Activated B cell treated with CpG ODN at 0.5 μM for 24 hours (primary cell): ENCODE measurements at regions of chr1 and their contacts with region 1.

Region 1: DNA sequence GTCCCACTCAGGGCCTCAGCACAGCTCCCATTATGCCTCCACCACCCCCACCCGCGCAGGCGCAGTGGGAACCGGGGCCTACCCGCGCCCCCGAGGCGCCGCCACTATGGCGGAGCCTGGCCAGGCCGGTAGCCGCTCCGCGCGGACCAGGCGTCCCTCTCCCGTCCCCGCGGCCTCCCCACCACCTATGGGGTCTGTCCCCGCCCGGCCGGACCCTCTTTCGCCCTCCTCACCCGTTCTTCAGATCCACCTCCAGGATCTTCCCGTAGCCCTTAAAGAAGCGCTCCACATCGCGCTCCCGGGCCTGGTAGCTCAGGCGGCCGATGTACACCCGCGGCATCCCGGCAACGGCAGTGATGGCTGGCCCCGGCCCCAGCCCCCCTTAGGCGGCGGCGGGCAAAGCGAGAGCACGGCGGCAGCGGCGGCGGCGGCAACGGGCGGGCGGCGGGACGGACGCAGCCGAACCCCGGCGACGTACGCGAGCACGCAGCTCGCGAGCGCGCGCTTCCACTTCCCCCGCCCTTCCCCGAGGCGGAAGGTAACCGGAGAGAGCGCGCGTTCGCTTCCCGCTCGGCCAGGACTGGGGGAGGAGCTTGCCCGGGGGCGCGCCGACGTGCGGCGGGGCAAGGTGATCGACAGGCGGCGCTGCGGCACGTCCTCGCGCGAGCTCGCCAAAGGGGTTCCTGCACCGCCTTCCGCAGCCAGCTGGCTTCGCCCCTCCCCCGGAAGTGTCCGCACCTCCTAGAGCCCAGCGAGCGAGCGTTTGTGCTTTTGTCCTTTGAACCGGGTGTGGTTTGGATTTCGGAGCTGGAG is at the start of gene SRSF4:
- DNase-seq: peak; percentile 99
- ATAC-seq: peak; percentile 95
- H3K4me3 Mint-ChIP-seq: peak within 1 kb of the TSS; percentile 95
- H3K27ac Mint-ChIP-seq: peak within 1 kb of the TSS; percentile 92
- H3K4me1 Mint-ChIP-seq: peaks cover 45% of the 10 kb centered on the region
- H3K27me3 Mint-ChIP-seq: no peaks in the 10 kb centered on the region
- CTCF ChIP-seq: no peak
- total RNA-seq, gene SRSF4: 80.3 and 92.6 TPM in 2 replicates

Region 2: GRCh38 chr1:28552758-28553663 is 628.6 kb before region 1 on chr1 and contains the start of gene TRNAU1AP:
- CTCF ChIA-PET with region 1: no interaction called
- POLR2A ChIA-PET with region 1: interaction called, 3 read pairs
- intact Hi-C with region 1: loop called (anchors 1 kb)
- DNase-seq: peak; percentile 94
- ATAC-seq: peak; percentile 93
- H3K4me3 Mint-ChIP-seq: peak within 1 kb of the TSS; percentile 99
- H3K27ac Mint-ChIP-seq: peak within 1 kb of the TSS; percentile 98
- H3K4me1 Mint-ChIP-seq: peaks cover 26% of the 10 kb centered on the region
- H3K27me3 Mint-ChIP-seq: no peaks in the 10 kb centered on the region
- CTCF ChIP-seq: no peak
- total RNA-seq, gene TRNAU1AP: 36.9 and 42.0 TPM in 2 replicates

Region 3: GRCh38 chr1:28648474-28649198 is 533.0 kb before region 1 on chr1 and contains the start of gene RNU11:
- CTCF ChIA-PET with region 1: no interaction called
- POLR2A ChIA-PET with region 1: interaction called, 27 read pairs
- intact Hi-C with region 1: loop called (anchors 1 kb)
- DNase-seq: peak; percentile 72
- ATAC-seq: peak; percentile 65
- H3K4me3 Mint-ChIP-seq: peak within 1 kb of the TSS; percentile 91
- H3K27ac Mint-ChIP-seq: peak within 1 kb of the TSS; percentile 100
- H3K4me1 Mint-ChIP-seq: peaks cover 35% of the 10 kb centered on the region
- H3K27me3 Mint-ChIP-seq: no peaks in the 10 kb centered on the region
- CTCF ChIP-seq: no peak
- total RNA-seq, gene RNU11: not detected in 2 replicates

Region 4: DNA sequence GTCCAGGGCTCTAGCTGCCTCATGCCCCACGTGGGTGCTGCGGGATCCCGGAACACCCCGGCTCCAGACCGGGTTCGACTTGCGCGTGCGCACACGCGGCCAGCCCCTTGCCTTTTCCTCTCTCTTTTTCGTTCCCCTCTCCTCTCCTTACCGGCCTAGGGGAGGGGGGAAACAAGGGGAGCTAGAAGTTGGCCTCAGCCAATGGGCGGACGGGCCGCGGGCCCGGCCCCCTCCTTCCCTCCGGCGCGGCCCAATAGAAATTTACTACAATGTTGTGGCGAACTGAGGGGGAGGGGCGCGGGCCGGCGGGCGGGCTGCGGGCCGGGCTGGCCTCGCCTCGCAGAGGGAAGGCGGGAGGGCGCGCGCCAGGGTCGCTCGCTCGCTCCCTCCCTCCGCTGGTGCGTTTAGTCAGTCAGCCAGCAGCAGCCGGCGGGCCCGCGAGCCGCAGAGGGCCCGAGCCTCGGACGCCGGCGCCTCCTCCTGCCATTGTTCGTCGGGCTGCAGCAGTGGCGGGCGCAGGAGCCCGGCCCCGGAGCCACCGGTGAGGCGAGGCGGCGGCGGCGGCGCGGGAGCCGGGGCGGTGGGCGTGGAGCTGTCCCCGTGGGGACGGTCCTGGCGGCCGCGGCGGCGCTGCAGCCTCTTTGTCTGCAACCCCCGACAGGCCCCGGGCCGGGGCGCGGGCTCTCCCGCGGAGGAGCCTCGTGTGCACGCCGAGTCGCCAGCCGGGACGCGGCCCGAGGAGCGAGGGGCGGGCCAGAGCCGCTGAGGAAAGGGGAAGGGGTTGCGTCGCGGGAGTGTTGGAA is 267.2 kb before region 1 on chr1 and contains the start of gene EPB41:
- CTCF ChIA-PET with region 1: no interaction called
- POLR2A ChIA-PET with region 1: interaction called, 11 read pairs
- intact Hi-C with region 1: no loop called
- DNase-seq: peak; percentile 86
- ATAC-seq: peak; percentile 93
- H3K4me3 Mint-ChIP-seq: peak within 1 kb of the TSS; percentile 97
- H3K27ac Mint-ChIP-seq: peak within 1 kb of the TSS; percentile 92
- H3K4me1 Mint-ChIP-seq: peaks cover 46% of the 10 kb centered on the region
- H3K27me3 Mint-ChIP-seq: no peaks in the 10 kb centered on the region
- CTCF ChIP-seq: no peak
- total RNA-seq, gene EPB41: 73.8 and 74.0 TPM in 2 replicates

Region 5: GRCh38 chr1:29171089-29171488 is 10.5 kb before region 1 on chr1:
- CTCF ChIA-PET with region 1: interaction called, 7 read pairs
- POLR2A ChIA-PET with region 1: interaction called, 20 read pairs
- intact Hi-C with region 1: loop called (anchors 1 kb)
- DNase-seq: no peak
- ATAC-seq: peak; percentile 64
- H3K4me3 Mint-ChIP-seq: peak overlapping the region; percentile 60
- H3K27ac Mint-ChIP-seq: peak overlapping the region; percentile 56
- H3K4me1 Mint-ChIP-seq: peaks cover 45% of the 10 kb centered on the region
- H3K27me3 Mint-ChIP-seq: no peaks in the 10 kb centered on the region
- CTCF ChIP-seq: no peak

Region 6: DNA sequence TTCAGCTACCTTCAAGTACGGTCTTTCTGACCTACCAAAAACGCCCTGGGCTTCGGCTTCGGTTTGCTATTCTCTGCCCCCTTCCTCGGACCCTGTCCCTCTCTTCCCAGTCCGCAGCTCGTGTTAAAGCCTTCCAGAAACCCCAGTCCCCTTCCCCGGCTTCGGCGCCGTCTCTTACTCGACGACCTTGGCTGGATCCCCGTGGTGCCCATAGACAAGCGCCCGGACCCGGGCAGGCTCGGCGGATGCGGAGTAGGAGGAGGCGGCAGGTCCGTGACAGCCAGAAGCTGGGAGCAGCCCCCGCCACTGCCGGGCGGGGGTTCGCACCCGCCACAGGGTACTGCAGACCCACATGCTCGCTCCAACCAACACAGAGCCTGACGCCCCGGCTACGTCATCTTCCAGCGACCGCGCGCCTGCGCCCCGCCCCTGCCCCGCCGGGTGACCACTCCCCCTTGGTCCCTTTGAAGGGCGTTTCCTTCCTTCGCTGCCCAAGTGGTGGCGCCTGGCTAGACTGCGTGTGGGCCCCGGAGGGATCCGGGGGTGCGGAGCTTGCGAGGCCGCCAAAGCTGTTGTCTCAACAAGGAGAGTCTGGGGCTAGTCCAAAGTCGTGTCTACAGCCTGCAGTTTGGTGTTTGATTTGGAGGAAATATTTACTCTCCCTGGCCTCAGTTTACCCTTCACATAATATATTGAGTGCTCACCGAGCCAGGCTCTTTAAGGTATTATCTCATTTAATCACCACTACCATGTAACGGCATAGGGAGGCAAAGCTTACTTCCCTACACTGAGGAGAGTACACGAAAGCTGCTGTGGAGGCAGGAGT is 49.1 kb after region 1 on chr1 and contains the start of gene MECR:
- CTCF ChIA-PET with region 1: no interaction called
- POLR2A ChIA-PET with region 1: interaction called, 15 read pairs
- intact Hi-C with region 1: loop called (anchors 1 kb)
- DNase-seq: peak; percentile 98
- ATAC-seq: peak; percentile 97
- H3K4me3 Mint-ChIP-seq: peak within 1 kb of the TSS; percentile 93
- H3K27ac Mint-ChIP-seq: peak within 1 kb of the TSS; percentile 84
- H3K4me1 Mint-ChIP-seq: peaks cover 18% of the 10 kb centered on the region
- H3K27me3 Mint-ChIP-seq: peaks cover 11% of the 10 kb centered on the region
- CTCF ChIP-seq: no peak
- total RNA-seq, gene MECR: 18.7 and 23.7 TPM in 2 replicates

Region 7: GRCh38 chr1:29563571-29563970 is 382.0 kb after region 1 on chr1:
- CTCF ChIA-PET with region 1: no interaction called
- POLR2A ChIA-PET with region 1: no interaction called
- intact Hi-C with region 1: no loop called
- DNase-seq: no peak
- ATAC-seq: no peak
- H3K4me3 Mint-ChIP-seq: no peak overlapping the region
- H3K27ac Mint-ChIP-seq: no peak overlapping the region
- H3K4me1 Mint-ChIP-seq: no peaks in the 10 kb centered on the region
- H3K27me3 Mint-ChIP-seq: peaks cover 1% of the 10 kb centered on the region
- CTCF ChIP-seq: no peak